Tibial artery (tissue), 4 donors: ENCODE measurements at regions of chr2 and their contacts with region 1.

Region 1: DNA sequence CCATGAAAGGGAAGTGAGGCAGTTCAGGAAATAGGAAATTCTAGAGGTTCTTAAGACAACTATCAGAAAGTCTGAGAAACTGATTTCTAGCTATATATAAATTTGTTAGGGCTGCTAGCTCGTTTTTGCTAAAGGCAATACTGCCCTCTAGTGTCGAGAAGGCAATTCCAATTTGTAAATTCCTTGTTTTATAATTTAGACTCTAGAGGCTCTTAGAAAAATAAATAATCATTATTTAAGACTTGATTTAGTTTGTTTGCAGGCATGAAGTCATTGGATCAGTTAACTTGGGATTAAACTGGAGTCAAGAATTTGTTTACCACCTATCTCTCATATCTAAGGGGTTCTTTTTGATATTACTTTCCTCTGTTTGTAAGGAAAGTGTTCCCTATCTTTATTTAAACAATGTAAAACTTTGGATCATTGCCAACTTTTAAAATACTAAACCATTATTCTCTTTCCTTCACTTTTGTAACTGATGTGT is 66.2 kb downstream of the ACVR2A start:
- DNase-seq: no peak
- H3K4me3 ChIP-seq: no peak overlapping the region
- H3K27ac ChIP-seq: no peak overlapping the region
- H3K4me1 ChIP-seq: peaks cover 0 to 16% (median 4%) of the 10 kb centered on the region in 4 donors
- H3K27me3 ChIP-seq: no peaks in the 10 kb centered on the region
- CTCF ChIP-seq: peak; percentile 71 to 80

Region 2: GRCh38 chr2:146939991-146940685 is 970.9 kb before region 1 on chr2:
- intact Hi-C with region 1: loop called (anchors 10 kb)
- DNase-seq: no peak
- H3K4me3 ChIP-seq: peak overlapping the region in 1 of 2 donors; percentile 31
- H3K27ac ChIP-seq: peak overlapping the region; percentile 23 to 44
- H3K4me1 ChIP-seq: peaks cover 0 to 16% (median 3%) of the 10 kb centered on the region in 4 donors
- H3K27me3 ChIP-seq: no peaks in the 10 kb centered on the region
- CTCF ChIP-seq: no peak